Esophagus muscularis mucosa (tissue), 4 donors: ENCODE measurements at regions of chr20 and their contacts with region 1.

Region 1: DNA sequence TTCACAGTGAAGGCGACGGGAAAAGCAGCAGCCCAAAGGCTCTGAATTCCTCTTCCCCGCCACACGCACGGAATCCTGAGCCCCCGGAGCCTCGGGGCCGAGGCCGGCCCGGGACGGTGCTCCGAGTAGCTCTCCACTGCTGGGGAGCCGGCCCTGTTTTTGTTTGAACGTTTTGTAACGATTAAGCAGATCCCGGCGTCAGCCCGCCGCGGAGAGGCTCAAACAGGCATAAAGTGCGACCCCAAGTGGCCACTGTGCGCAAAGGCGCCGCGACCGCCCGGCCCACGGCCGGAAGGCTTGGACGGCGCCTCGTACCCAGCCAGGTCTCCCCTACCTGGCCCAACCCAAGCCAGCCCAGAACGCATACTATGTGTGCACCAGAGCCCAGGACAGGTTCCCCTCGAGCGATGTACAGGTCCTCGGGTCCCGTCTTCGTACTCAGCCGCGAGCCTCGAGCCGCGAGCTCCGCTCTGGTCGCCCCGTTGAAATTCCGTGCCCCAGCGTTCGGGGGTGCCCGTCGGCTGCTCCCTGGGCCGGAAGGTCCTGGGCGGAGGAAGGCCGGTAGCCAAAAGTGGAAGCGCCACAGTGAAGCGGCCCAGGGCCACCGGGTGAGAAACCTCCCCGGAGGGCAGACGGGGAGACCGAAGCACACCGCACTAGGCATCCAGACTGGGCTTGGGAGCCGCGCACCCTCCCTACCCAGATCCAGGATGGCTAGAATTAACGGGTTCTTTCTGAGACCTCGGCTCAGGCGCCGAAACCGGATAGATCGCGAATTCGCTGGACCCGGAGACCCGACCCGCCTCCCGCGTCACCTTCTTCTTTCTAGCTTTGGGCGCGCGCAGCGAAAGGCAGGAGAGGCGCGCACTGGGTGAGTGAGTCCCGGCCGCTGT is 1.2 kb upstream of the MAFB start:
- DNase-seq: peak; percentile 98
- H3K4me3 ChIP-seq: peak overlapping the region; percentile 60 to 82 (median 70)
- H3K27ac ChIP-seq: peak overlapping the region; percentile 92 to 97 (median 95)
- H3K4me1 ChIP-seq: peaks cover 24 to 58% (median 52%) of the 10 kb centered on the region in 4 donors
- H3K27me3 ChIP-seq: peaks cover 0 to 57% (median 35%) of the 10 kb centered on the region in 4 donors
- CTCF ChIP-seq: peak; percentile 90 to 97 (median 95)
- EP300 ChIP-seq: no peak
- POLR2A ChIP-seq: no peak

Region 2: DNA sequence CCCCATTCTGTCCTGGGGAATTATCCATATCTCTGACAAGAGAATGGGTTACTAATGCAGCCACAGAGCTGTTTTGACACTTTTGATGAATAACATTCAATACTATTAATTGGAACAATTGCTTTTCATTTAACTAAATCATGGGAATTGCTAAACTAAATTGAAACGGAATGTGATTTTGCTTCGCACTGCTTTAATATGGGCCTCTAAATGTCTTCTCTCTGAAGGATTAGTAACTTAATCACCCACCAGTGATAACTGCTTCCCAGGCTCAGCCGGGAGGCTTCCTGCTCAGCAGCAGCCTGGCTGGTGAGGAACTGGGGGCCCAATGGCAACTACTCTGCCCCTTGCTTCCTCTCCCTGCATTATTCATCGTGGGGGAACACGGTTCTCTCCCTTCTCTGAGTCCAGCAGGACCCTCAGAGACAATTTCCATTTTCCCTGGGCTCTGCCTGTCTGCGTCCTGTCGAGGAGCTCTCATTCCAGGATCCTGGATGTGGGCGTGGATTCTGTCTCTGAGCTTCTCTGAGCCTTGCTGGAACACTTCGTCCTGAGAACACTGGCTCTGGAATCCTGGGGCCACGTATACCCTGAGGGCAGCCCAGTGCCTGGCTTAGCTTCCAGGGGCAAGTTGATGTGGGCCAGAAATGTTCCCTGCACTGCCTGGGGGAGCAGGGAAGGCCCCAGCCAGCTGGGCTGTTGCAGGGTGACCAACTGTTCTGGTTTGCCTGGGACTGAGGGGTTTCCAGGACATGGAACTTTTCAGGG is 1419.2 kb before region 1 on chr20:
- intact Hi-C with region 1: loop called (anchors 5 kb)
- DNase-seq: no peak
- H3K4me3 ChIP-seq: no peak overlapping the region
- H3K27ac ChIP-seq: no peak overlapping the region
- H3K4me1 ChIP-seq: peaks cover 0 to 18% (median 11%) of the 10 kb centered on the region in 4 donors
- H3K27me3 ChIP-seq: no peaks in the 10 kb centered on the region
- CTCF ChIP-seq: no peak
- EP300 ChIP-seq: no peak
- POLR2A ChIP-seq: no peak

Region 3: GRCh38 chr20:39885975-39886649 is 804.1 kb before region 1 on chr20:
- intact Hi-C with region 1: loop called (anchors 2 kb)
- DNase-seq: no peak
- H3K4me3 ChIP-seq: no peak overlapping the region
- H3K27ac ChIP-seq: no peak overlapping the region
- H3K4me1 ChIP-seq: peaks cover 0 to 12% (median 8%) of the 10 kb centered on the region in 4 donors
- H3K27me3 ChIP-seq: no peaks in the 10 kb centered on the region
- CTCF ChIP-seq: peak; percentile 57 to 68 (median 61)
- EP300 ChIP-seq: no peak
- POLR2A ChIP-seq: no peak

Region 4: GRCh38 chr20:40160097-40160550 is 530.1 kb before region 1 on chr20:
- intact Hi-C with region 1: loop called (anchors 5 kb)
- DNase-seq: no peak
- H3K4me3 ChIP-seq: no peak overlapping the region
- H3K27ac ChIP-seq: no peak overlapping the region
- H3K4me1 ChIP-seq: no peaks in the 10 kb centered on the region
- H3K27me3 ChIP-seq: no peaks in the 10 kb centered on the region
- CTCF ChIP-seq: peak; percentile 51 to 68 (median 54)
- EP300 ChIP-seq: no peak
- POLR2A ChIP-seq: no peak